PC-3 (cell line): ENCODE measurements at regions of chr13 and their contacts with region 1.

Region 1: DNA sequence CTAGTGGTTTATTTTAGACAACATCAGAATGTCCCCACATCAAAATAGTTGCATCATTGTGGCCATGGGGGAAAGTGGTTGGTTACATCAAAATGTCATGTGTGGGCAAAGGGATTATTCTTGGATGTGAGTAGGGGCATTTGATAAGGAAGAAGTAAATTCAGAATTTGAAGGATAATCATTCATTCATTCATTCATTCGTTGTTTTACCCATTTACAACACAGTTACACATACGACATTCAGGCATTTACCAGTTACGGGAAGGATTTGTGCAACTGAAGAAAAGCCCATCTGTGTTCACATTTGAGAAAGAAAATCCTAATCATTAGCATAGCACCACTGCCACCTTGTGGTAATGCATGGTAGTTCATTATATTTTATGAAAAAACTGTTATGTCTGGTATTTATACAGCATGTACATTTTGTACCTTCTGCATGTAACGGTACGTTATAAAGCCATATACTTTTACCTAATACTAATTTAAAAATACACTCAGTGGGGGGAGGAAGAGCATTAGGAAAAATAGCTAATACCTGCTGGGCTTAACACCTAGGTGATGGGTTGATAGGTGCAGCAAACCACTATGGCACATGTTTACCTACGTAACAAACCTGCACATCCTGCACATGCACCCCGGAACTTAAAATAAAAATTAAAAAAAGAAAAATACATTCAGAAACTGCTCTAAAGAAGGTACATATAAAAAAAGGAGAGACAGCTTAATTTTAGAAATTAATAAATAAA is 62.1 kb downstream of the DGKH start:
- DNase-seq: peak; percentile 83
- ATAC-seq: no peak; the same call in 1 of the 2 replicates
- H3K4me3 ChIP-seq: no peak overlapping the region
- H3K27ac ChIP-seq: no peak overlapping the region
- H3K4me1 ChIP-seq: peaks cover 52% of the 10 kb centered on the region
- H3K27me3 ChIP-seq: no peaks in the 10 kb centered on the region
- CTCF ChIP-seq: peak; percentile 73

Region 2: GRCh38 chr13:41327994-41328790 is 782.4 kb before region 1 on chr13:
- CTCF ChIA-PET with region 1: no interaction called
- POLR2A ChIA-PET with region 1: no interaction called
- intact Hi-C with region 1: no loop called
- DNase-seq: no peak
- ATAC-seq: no peak
- H3K4me3 ChIP-seq: no peak overlapping the region
- H3K27ac ChIP-seq: no peak overlapping the region
- H3K4me1 ChIP-seq: no peaks in the 10 kb centered on the region
- H3K27me3 ChIP-seq: no peaks in the 10 kb centered on the region
- CTCF ChIP-seq: no peak

Region 3: GRCh38 chr13:41411522-41411921 is 699.1 kb before region 1 on chr13:
- CTCF ChIA-PET with region 1: no interaction called
- POLR2A ChIA-PET with region 1: no interaction called
- intact Hi-C with region 1: loop called (anchors 10 kb)
- DNase-seq: peak; percentile 58
- ATAC-seq: peak; percentile 89
- H3K4me3 ChIP-seq: no peak overlapping the region
- H3K27ac ChIP-seq: no peak overlapping the region
- H3K4me1 ChIP-seq: no peaks in the 10 kb centered on the region
- H3K27me3 ChIP-seq: no peaks in the 10 kb centered on the region
- CTCF ChIP-seq: peak; percentile 60

Region 4: GRCh38 chr13:41905600-41906254 is 204.9 kb before region 1 on chr13:
- CTCF ChIA-PET with region 1: no interaction called
- POLR2A ChIA-PET with region 1: no interaction called
- intact Hi-C with region 1: loop called (anchors 1 kb)
- DNase-seq: peak; percentile 54
- ATAC-seq: peak; percentile 85
- H3K4me3 ChIP-seq: no peak overlapping the region
- H3K27ac ChIP-seq: no peak overlapping the region
- H3K4me1 ChIP-seq: no peaks in the 10 kb centered on the region
- H3K27me3 ChIP-seq: no peaks in the 10 kb centered on the region
- CTCF ChIP-seq: peak; percentile 72

Region 5: DNA sequence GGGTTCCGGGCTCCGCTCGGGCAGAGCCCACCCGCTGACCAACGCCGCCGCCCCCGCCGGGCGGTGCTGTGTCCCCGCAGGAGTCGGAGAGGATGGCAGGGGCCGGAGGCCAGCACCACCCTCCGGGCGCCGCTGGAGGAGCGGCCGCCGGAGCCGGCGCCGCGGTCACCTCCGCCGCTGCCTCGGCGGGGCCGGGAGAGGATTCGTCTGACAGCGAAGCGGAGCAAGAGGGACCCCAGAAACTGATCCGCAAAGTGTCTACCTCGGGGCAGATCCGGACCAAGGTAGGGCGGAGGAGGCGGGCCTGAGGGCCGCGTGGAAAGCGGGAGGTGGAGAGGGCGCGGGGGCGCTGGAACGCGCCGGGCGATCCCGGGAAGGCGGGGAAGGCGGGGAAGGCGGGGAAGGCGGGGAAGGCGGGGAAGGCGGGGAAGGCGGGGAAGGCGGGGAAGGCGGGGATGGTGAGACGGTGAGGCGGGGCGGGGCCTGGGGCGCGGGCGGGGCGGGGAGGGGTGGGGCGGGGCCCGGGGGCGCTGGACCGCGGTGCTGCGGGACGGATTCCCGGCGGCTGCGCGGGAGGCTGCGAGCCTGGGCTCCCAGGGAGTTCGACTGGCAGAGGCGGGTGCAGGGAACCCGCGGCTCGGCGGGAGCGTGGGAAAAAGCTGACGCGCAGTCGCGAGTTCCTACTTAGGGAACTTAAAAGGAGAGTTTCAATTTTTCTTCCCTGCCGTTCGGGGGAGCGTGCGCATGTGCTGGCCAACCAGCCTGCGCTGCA is 61.7 kb before region 1 on chr13:
- CTCF ChIA-PET with region 1: no interaction called
- POLR2A ChIA-PET with region 1: interaction called, 5 read pairs
- intact Hi-C with region 1: loop called (anchors 5 kb)
- DNase-seq: peak; percentile 61
- ATAC-seq: peak; percentile 50
- H3K4me3 ChIP-seq: peak overlapping the region; percentile 83
- H3K27ac ChIP-seq: peak overlapping the region; percentile 85
- H3K4me1 ChIP-seq: peaks cover 12% of the 10 kb centered on the region
- H3K27me3 ChIP-seq: no peaks in the 10 kb centered on the region
- CTCF ChIP-seq: peak; percentile 29; the same call in 1 of the 2 replicates

Region 6: GRCh38 chr13:42083138-42083770 is 27.3 kb before region 1 on chr13:
- CTCF ChIA-PET with region 1: no interaction called
- POLR2A ChIA-PET with region 1: no interaction called
- intact Hi-C with region 1: no loop called
- DNase-seq: no peak
- ATAC-seq: no peak
- H3K4me3 ChIP-seq: no peak overlapping the region
- H3K27ac ChIP-seq: no peak overlapping the region
- H3K4me1 ChIP-seq: no peaks in the 10 kb centered on the region
- H3K27me3 ChIP-seq: no peaks in the 10 kb centered on the region
- CTCF ChIP-seq: no peak

Region 7: DNA sequence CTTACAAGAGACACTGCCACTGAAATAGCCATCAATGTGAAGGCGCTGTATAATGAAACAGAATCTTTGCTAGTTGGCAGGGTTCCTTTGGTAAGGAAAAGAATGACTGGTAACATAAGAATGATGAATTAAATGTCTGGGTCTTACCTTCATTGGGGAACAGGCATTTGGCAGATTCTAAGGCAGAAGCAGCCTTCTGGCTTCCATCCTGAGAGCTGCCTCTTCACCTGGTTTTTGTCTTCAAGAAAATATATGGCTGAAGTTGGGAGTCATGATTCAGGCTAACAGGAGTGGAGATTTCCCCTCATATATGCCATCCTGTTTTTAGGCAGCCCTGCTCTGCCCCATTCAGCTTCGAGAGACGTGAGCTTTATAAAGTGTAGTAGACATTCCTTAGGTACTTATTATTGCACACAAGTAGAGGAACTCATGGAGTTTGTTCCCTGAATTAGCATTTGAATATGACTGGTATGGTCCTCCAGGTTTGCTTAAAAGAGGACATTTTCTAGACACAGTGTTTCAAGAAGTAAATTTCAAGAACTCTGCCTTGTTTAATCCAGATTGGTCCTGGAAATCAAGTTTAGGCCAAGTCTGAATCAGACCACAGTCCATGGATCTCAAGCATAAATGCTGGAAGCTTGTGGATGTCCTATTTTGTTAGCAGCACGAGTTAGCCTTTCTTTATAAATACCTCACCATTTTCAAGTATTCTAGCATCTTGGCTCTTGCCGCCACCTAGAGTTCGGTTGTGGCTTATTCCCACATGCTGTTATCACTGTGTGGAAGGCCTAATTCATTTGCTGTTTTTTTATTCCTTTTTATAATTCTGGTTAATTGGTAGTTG is 105.2 kb after region 1 on chr13:
- CTCF ChIA-PET with region 1: no interaction called
- POLR2A ChIA-PET with region 1: no interaction called
- intact Hi-C with region 1: loop called (anchors 1 kb)
- DNase-seq: peak; percentile 53
- ATAC-seq: peak; percentile 80
- H3K4me3 ChIP-seq: no peak overlapping the region
- H3K27ac ChIP-seq: no peak overlapping the region
- H3K4me1 ChIP-seq: peaks cover 20% of the 10 kb centered on the region
- H3K27me3 ChIP-seq: no peaks in the 10 kb centered on the region
- CTCF ChIP-seq: peak; percentile 77